HCT116 (cell line): ENCODE measurements at regions of chr6 and their contacts with region 1.

Region 1: DNA sequence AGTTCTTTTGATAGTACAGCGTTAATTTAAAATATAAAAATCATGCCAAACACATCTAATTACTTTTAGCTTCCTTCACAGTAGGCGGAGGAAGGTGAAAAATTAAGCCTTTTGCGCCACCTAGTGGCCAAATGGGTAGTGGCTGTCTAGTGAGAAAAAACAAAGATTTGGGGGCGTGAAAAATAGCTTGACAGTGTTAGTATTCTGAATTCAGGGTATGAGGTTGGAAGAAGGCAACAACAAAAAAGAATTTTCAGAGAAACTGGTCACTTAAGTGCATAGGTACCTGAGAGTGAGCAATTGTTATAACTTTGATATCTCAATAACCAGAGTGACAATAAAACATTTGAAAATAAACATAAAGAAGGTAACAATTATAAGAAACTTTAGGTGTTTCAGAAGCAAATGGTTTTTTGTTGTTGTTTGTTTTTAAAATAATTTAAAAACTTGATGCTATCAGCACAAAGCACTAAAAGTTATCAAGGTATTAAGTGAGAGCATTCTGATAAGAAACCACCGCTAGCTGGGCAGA is 14.3 kb downstream of the PSMB9 start:
- DNase-seq: peak; percentile 63
- ATAC-seq: peak; percentile 88
- H3K4me3 ChIP-seq: no peak overlapping the region
- H3K27ac ChIP-seq: no peak overlapping the region
- H3K4me1 ChIP-seq: peaks cover 0 to 4% of the 10 kb centered on the region in 2 experiments; a peak in 1 of 4 replicates
- H3K27me3 ChIP-seq: no peaks in the 10 kb centered on the region
- CTCF ChIP-seq: peak; percentile 82 to 94 (median 93)
- POLR2A ChIP-seq: no peak
- RAD21 ChIP-seq: peak; percentile 93

Region 2: DNA sequence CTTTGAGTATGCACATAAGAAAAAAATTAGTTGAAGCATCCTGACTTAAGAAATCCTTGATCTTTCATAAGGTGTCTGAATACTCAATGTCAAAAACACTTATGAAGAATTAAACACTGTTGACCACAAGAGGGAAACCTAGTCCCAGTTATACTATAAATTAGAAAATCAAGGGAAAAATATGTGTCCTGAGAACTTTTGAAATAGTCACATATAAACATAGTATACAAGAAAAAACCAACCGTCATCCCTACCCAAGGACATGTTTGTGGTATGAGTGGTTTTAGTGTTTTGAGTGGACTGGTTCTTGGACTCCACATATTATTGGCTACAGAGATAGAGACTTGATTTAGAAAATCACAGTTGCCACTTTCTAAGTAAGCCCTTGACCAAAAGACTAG is 436.3 kb before region 1 on chr6:
- CTCF ChIA-PET with region 1: interaction called, 8 read pairs
- POLR2A ChIA-PET with region 1: no interaction called
- RAD21 ChIA-PET with region 1: no interaction called
- intact Hi-C with region 1: loop called (anchors 5 kb)
- DNase-seq: peak; percentile 40
- ATAC-seq: no peak
- H3K4me3 ChIP-seq: no peak overlapping the region
- H3K27ac ChIP-seq: no peak overlapping the region
- H3K4me1 ChIP-seq: no peaks in the 10 kb centered on the region
- H3K27me3 ChIP-seq: no peaks in the 10 kb centered on the region
- CTCF ChIP-seq: peak; percentile 13 to 79 (median 55); a peak in 5 of 6 replicates
- POLR2A ChIP-seq: no peak
- RAD21 ChIP-seq: peak; percentile 83

Region 3: GRCh38 chr6:32785781-32786533 is 82.4 kb before region 1 on chr6:
- CTCF ChIA-PET with region 1: interaction called, 19 read pairs
- POLR2A ChIA-PET with region 1: no interaction called
- RAD21 ChIA-PET with region 1: interaction called in 1 of 2 experiments, 6 read pairs
- intact Hi-C with region 1: no loop called
- DNase-seq: peak; percentile 64
- ATAC-seq: peak; percentile 99
- H3K4me3 ChIP-seq: no peak overlapping the region
- H3K27ac ChIP-seq: no peak overlapping the region
- H3K4me1 ChIP-seq: peaks cover 0 to 8% of the 10 kb centered on the region in 2 experiments; a peak in 2 of 4 replicates
- H3K27me3 ChIP-seq: no peaks in the 10 kb centered on the region
- CTCF ChIP-seq: peak; percentile 65 to 72 (median 69)
- POLR2A ChIP-seq: no peak
- RAD21 ChIP-seq: peak; percentile 87

Region 4: DNA sequence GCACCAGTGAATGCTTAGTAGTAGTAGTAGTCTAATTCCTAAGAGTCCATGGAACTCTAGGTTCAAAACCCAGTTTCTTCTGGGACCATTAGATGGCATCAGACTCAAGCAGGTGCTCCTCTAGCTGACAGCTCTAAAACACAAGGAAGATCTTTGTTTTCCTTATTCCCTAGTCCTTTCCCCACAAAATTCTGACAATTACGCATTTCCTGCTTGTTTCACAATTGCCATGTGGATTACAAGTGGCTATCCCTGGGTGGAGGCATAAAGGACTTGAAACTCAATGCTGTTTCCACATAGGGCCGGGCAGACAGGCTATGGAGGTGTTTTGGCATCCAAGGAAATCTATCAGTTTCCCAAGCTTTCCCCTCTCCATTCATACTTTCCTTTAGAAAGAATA is 42.4 kb before region 1 on chr6:
- CTCF ChIA-PET with region 1: interaction called, 55 read pairs
- POLR2A ChIA-PET with region 1: no interaction called
- RAD21 ChIA-PET with region 1: interaction called, 3 to 6 read pairs
- intact Hi-C with region 1: loop called (anchors 1 kb)
- DNase-seq: no peak
- ATAC-seq: peak; percentile 52
- H3K4me3 ChIP-seq: no peak overlapping the region
- H3K27ac ChIP-seq: no peak overlapping the region
- H3K4me1 ChIP-seq: no peaks in the 10 kb centered on the region
- H3K27me3 ChIP-seq: no peaks in the 10 kb centered on the region
- CTCF ChIP-seq: peak; percentile 27 to 44 (median 34); a peak in 4 of 6 replicates
- POLR2A ChIP-seq: no peak
- RAD21 ChIP-seq: peak; percentile 71

Region 5: GRCh38 chr6:32843979-32844838 is 24.1 kb before region 1 on chr6 and contains the start of gene PSMB8:
- CTCF ChIA-PET with region 1: interaction called, 189 read pairs
- POLR2A ChIA-PET with region 1: interaction called, 23 read pairs
- RAD21 ChIA-PET with region 1: interaction called, 34 to 36 read pairs
- intact Hi-C with region 1: no loop called
- DNase-seq: peak; percentile 92
- ATAC-seq: peak; percentile 100
- H3K4me3 ChIP-seq: peak within 1 kb of the TSS; percentile 5 to 22; a peak in 1 of 4 replicates
- H3K27ac ChIP-seq: peak within 1 kb of the TSS; percentile 33; the same call in 1 of the 2 replicates
- H3K4me1 ChIP-seq: peaks cover 8 to 16% of the 10 kb centered on the region in 2 experiments; a peak in 3 of 4 replicates
- H3K27me3 ChIP-seq: no peaks in the 10 kb centered on the region
- CTCF ChIP-seq: no peak
- POLR2A ChIP-seq: no peak
- RAD21 ChIP-seq: no peak
- total RNA-seq, gene PSMB8: 0.96 TPM

Region 6: DNA sequence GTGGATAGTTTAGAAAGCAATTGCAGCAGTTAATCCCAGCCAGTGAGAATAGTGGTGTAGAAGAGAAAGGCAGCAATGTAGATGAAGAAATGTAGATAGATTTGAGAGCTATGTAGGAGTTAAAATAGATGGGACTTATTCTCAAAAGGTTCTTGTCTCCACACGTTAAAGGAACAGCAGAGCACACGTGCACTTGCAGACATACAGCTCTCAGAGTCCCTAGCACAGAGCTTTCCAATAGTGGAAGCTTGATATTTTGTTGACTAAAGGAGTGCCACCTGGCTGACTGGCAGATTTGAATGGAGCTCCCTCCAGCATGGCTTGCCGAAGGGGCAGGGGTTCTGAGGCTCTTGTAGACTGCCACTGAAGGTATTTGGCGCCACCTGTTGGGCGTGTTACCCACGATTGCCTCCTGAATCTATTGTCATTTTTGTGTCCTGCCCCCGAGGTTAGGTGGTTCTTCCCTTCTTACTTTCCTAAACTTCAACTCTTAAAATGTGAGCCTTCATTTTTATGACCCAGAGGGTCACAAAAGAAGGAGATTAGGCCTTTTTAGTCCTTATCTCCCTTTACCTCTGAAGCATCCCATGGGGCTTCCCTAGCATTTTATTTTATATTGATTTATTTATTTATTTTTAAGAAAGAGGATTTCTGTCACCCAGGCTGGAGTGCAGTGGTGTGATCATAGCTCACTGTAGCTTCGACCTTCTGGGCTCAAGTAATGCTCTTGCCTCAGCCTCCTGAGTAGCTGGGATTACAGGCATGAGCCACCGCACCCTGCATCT is 116.5 kb after region 1 on chr6:
- CTCF ChIA-PET with region 1: interaction called, 23 read pairs
- POLR2A ChIA-PET with region 1: no interaction called
- RAD21 ChIA-PET with region 1: interaction called in 1 of 2 experiments, 3 read pairs
- intact Hi-C with region 1: no loop called
- DNase-seq: peak; percentile 77
- ATAC-seq: peak; percentile 81
- H3K4me3 ChIP-seq: no peak overlapping the region
- H3K27ac ChIP-seq: no peak overlapping the region
- H3K4me1 ChIP-seq: no peaks in the 10 kb centered on the region
- H3K27me3 ChIP-seq: no peaks in the 10 kb centered on the region
- CTCF ChIP-seq: peak; percentile 84 to 95 (median 90)
- POLR2A ChIP-seq: no peak
- RAD21 ChIP-seq: peak; percentile 98

Region 7: DNA sequence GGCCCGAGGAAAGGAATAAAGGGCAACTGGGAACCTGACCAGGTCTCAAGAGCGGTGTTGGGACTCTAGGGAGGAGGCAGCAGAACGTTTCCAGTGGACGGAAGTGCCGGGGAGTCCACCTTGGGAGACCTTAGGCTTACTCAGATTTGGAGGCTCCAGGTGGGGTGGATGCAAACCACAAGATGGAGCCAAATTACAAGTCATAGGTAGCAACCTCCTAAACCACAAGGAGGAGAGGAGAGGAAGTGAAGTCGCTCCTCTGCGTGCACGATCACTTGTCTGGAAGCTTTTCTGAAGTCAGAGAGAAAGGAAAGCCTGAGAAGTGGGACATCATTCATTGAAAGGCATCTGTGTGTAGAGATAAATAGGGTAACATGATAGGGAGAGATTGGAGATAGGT is 131.7 kb after region 1 on chr6:
- CTCF ChIA-PET with region 1: no interaction called
- POLR2A ChIA-PET with region 1: no interaction called
- RAD21 ChIA-PET with region 1: no interaction called
- intact Hi-C with region 1: no loop called
- DNase-seq: peak; percentile 66
- ATAC-seq: peak; percentile 96
- H3K4me3 ChIP-seq: no peak overlapping the region
- H3K27ac ChIP-seq: no peak overlapping the region
- H3K4me1 ChIP-seq: 0 out of 4 replicates have a peak, but pooled peaks cover 0 to 5% of the 10 kb centered on the region in 2 experiments
- H3K27me3 ChIP-seq: no peaks in the 10 kb centered on the region
- CTCF ChIP-seq: peak; percentile 53 to 70 (median 63); a peak in 5 of 6 replicates
- POLR2A ChIP-seq: no peak
- RAD21 ChIP-seq: peak; percentile 86